ENCODE measurements at regions of chr5 and their contacts with region 1.

Region 1: DNA sequence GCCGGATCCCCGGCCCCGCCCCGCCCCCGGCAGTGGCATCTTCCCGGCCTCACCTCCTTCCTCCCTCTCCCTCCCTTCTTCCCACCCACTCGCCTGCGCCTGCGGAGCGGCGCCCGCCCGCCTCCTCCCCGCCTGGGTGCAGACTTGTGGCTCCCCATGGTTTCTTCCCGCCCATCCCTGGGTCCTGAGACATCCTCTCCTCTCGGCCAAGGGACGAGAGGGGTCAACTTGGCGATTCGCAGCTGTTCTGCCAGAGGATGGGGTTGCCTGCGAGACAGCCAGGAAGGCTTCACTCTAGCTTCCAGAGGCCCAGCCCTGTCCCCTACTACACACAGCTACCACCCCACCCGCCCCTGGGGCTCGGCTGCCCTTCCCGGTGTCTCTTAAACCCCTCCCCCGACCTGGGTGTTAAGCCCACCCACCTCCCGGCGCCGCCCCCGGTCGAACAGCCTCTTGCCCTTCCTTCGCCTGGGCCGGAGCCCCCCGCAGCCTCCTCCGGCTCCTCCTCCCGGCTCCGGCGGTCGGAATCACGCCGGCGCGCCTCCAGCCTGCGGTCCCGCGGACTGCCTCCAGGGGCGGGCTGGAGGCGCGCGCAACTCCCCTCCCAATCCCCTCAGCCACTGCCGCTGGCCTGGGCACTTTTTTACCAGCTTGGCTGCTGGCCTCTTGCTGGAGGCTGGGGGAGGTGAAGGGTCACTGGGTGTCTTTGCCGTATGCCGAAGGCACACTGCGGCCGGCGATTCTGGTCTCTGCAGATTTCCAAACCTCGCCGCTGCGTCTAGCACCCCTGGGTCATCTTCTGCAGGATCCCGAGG is 1.9 kb downstream of the JADE2 start:
- DNase-seq: peak; percentile 93
- H3K4me3 Mint-ChIP-seq: peak overlapping the region; percentile 91
- H3K27ac Mint-ChIP-seq: peak overlapping the region; percentile 49
- H3K4me1 Mint-ChIP-seq: peaks cover 50% of the 10 kb centered on the region
- H3K27me3 Mint-ChIP-seq: no peaks in the 10 kb centered on the region
- CTCF ChIP-seq: peak; percentile 94

Region 2: DNA sequence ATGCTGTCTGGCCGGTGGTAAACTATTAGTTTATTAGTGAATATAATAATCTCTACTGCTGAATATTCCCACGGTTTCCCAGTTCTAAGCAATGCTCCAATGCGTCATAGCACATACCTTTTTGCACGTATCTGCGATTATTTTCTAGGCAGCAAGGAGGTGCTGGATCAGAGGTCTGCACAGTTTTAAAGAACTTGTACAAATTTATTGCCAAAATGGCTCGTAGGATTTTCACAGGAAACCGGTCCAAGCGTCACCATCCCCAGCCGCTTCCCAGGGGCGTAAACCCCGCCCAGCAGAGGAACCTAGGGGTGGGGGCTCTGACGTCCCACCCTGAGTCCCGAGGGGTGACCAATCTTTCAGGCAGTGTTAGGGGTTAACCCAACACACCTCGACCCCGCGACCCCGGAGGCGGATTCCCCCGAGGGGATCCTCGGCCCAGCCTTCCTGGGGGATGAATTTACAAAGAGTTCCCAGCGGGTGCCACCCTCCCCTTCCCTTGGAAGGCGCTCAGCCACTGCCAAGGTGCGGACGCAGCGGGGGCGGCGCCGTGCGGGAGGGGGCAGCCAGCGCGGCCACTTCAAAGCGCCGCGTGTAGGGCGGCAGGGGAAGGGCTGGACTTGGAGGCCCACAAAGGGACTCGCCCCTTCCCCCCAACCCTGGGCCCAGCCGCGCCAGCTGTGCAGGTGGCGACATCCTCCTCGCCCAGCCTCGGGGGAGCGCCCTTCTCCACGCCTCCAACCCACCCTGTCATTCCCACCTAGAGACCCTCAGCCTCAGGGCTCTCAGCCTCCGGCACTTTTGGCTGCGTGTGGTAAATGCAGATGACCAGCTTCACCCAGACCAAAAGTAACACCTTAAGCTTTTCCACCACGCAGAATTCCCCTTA is 456.4 kb before region 1 on chr5:
- CTCF ChIA-PET with region 1: no interaction called
- POLR2A ChIA-PET with region 1: no interaction called
- intact Hi-C with region 1: no loop called
- DNase-seq: no peak
- H3K4me3 Mint-ChIP-seq: no peak overlapping the region
- H3K27ac Mint-ChIP-seq: no peak overlapping the region
- H3K4me1 Mint-ChIP-seq: no peaks in the 10 kb centered on the region
- H3K27me3 Mint-ChIP-seq: no peaks in the 10 kb centered on the region
- CTCF ChIP-seq: no peak

Region 3: DNA sequence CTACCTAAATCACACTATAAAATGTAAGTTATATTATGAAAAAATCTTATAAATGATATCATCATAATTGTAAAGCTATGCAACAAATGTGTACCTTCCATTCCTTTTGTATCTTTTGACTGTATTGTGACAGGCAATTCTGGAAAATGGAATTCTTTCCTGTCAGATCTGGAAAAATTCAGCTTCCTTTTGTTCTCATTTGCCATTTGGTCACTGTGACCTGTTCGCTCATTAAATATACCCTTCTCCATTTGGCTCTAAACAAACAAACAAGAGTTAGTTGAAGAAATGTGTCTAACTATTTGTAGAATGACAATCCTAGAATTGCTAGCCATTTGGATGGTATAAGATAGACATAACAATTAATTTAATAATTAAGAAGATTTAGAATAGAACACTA is 223.0 kb before region 1 on chr5:
- CTCF ChIA-PET with region 1: interaction called, 5 read pairs
- POLR2A ChIA-PET with region 1: interaction called, 5 read pairs
- intact Hi-C with region 1: loop called (anchors 2 kb)
- DNase-seq: no peak
- H3K4me3 Mint-ChIP-seq: no peak overlapping the region
- H3K27ac Mint-ChIP-seq: no peak overlapping the region
- H3K4me1 Mint-ChIP-seq: no peaks in the 10 kb centered on the region
- H3K27me3 Mint-ChIP-seq: no peaks in the 10 kb centered on the region
- CTCF ChIP-seq: no peak

Region 4: GRCh38 chr5:134436523-134437339 is 90.6 kb before region 1 on chr5:
- CTCF ChIA-PET with region 1: interaction called, 9 read pairs
- POLR2A ChIA-PET with region 1: interaction called, 180 read pairs
- intact Hi-C with region 1: loop called (anchors 1 kb)
- DNase-seq: peak; percentile 96
- H3K4me3 Mint-ChIP-seq: peak overlapping the region; percentile 63
- H3K27ac Mint-ChIP-seq: peak overlapping the region; percentile 98
- H3K4me1 Mint-ChIP-seq: peaks cover 72% of the 10 kb centered on the region
- H3K27me3 Mint-ChIP-seq: no peaks in the 10 kb centered on the region
- CTCF ChIP-seq: no peak

Region 5: DNA sequence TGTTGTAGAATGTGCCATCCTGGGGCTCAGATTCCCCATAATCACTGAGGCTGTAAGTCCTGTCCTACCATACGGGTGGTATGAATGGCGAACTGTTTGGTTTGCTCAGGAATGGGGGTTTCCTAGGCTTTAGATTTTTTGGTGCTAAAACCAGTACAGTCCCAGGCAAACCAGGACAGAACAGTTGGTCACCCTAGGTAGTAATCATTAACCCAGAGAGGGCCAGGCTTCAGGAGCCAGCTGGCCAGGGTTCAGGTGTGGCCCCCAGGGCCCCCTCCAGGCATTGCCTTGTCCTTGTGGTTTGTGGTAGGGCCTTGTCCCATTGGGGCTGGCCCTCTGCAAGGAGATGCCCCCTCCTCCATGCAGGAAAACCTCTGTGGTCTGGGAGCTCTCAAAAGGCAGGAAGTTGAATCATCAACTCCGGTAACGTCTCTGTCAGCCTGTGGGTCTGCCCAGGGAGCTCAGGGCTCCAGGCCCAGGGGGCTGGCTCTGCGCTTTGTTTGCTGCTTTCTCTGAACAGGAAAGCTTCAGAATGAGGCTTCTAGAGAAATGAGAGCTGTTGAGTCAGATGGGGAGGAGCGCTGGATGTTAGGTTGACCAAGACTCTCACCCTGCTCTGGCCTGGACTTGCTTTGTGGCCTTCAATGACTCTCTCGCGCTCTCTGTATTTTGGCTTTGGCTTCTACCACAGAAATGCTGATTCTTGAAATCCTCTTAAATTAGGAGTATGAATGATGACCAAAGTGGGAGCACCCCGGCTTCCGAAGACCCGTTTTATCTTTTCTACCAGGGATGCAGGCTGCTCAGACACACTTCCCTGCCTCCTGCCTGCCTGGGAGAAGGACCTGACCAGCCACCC is 24.0 kb before region 1 on chr5:
- CTCF ChIA-PET with region 1: interaction called, 3 read pairs
- POLR2A ChIA-PET with region 1: interaction called, 300 read pairs
- intact Hi-C with region 1: loop called (anchors 2 kb)
- DNase-seq: peak; percentile 100
- H3K4me3 Mint-ChIP-seq: peak overlapping the region; percentile 10
- H3K27ac Mint-ChIP-seq: peak overlapping the region; percentile 90
- H3K4me1 Mint-ChIP-seq: peaks cover 45% of the 10 kb centered on the region
- H3K27me3 Mint-ChIP-seq: no peaks in the 10 kb centered on the region
- CTCF ChIP-seq: no peak

Region 6: GRCh38 chr5:134547579-134547978 is 20.2 kb after region 1 on chr5:
- CTCF ChIA-PET with region 1: interaction called, 5 read pairs
- POLR2A ChIA-PET with region 1: interaction called, 21 read pairs
- intact Hi-C with region 1: loop called (anchors 1 kb)
- DNase-seq: peak; percentile 91
- H3K4me3 Mint-ChIP-seq: no peak overlapping the region
- H3K27ac Mint-ChIP-seq: peak overlapping the region; percentile 57
- H3K4me1 Mint-ChIP-seq: peaks cover 19% of the 10 kb centered on the region
- H3K27me3 Mint-ChIP-seq: no peaks in the 10 kb centered on the region
- CTCF ChIP-seq: no peak

Region 7: DNA sequence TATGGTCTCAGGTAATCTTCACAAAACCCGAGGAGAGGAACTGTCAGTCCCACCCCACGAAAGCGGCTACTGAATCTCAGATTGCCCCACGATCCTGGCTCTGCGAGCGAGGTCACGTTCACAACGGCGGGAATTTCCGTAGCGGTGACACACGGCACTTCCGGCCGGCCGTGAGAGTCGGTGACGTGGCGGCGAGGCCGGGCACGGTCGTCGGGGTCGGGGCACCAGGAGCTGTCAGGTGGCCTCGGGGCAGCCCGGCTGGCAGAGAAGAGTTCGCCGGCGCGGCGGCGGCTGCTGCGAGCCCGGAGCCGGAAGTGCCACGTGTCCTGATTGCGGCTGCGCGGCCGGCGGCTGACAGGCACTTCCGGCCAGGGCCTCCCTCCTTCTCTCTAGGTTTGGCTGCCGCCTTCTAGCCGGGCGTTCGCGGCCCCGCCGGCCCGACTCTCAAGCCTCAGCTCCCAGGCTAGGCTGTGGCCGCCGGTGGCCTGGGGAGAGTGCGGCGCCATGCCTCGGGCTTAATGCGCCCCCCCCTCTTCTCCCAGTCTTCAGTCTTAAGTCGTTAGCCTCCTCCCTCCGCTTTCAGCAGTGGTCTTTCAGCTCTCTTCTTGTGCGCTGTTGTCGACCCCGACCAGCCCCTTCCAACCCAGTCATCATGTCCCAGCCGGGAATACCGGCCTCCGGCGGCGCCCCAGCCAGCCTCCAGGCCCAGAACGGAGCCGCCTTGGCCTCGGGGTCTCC is 121.2 kb after region 1 on chr5 and contains the start of gene SEC24A:
- CTCF ChIA-PET with region 1: interaction called, 6 read pairs
- POLR2A ChIA-PET with region 1: interaction called, 14 read pairs
- intact Hi-C with region 1: no loop called
- DNase-seq: peak; percentile 95
- H3K4me3 Mint-ChIP-seq: peak within 1 kb of the TSS; percentile 99
- H3K27ac Mint-ChIP-seq: peak within 1 kb of the TSS; percentile 100
- H3K4me1 Mint-ChIP-seq: peaks cover 5% of the 10 kb centered on the region
- H3K27me3 Mint-ChIP-seq: no peaks in the 10 kb centered on the region
- CTCF ChIP-seq: no peak
- total RNA-seq, gene SEC24A: 39.1 and 41.4 TPM in 2 replicates